Endothelial cell of umbilical vein (primary cell): ENCODE measurements at regions of chr1 and their contacts with region 1.

Region 1: GRCh38 chr1:165367375-165367993 is 11.0 kb upstream of the LMX1A start:
- DNase-seq: peak; percentile 69
- H3K4me3 ChIP-seq: no peak overlapping the region
- H3K27ac ChIP-seq: no peak overlapping the region
- H3K4me1 ChIP-seq: no peaks in the 10 kb centered on the region
- H3K27me3 ChIP-seq: peaks cover 5 to 14% of the 10 kb centered on the region in 2 experiments
- CTCF ChIP-seq: peak; percentile 88 to 96
- POLR2A ChIP-seq: no peak

Region 2: DNA sequence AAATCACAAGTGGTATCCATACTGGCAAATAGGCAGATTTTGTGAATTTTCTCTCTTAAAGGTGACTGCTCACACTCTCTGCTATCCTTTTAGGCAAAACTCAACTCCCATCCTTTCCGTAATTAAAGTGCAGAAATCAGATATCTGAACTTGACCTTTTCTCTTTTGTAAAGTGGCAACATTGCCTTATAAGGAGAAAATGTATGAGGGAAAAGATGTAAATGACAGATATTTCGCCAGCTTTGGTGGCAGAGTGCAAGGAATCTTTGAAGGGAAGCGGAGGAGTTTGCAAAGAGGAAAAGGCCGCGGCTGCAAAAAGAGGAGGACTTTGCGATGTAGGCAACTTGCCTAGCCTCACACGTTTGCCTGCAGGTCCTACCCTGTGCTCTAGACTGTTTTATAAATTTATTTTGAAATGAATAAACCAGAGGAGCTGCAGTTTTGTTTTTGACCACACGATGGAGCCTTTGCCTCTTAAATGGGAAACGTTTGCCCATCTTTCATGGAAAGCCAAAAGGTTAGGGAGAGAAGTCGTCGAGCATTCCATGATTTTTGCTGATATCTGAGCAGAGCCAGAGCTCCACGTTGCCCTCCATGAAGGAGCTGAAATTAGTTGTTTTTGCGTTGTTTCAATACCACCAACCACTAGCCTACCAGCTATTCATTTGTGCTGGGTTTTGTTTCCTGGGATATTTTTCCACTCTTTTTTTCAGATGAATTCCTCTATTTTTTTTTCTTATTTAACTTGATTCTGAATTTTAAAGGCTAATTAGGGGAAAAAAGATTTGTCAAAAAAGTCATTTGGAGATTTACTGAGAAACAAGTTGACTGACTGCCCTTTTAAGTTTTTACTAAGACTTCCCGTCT is 253.2 kb before region 1 on chr1:
- CTCF ChIA-PET with region 1: interaction called, 4 read pairs
- POLR2A ChIA-PET with region 1: no interaction called
- dilution Hi-C with region 1: no loop called
- intact Hi-C with region 1: loop called (anchors 2 kb)
- DNase-seq: peak; percentile 48
- H3K4me3 ChIP-seq: no peak overlapping the region
- H3K27ac ChIP-seq: no peak overlapping the region
- H3K4me1 ChIP-seq: no peaks in the 10 kb centered on the region
- H3K27me3 ChIP-seq: peaks cover 1 to 10% of the 10 kb centered on the region in 2 experiments
- CTCF ChIP-seq: peak; percentile 56 to 68
- POLR2A ChIP-seq: no peak

Region 3: GRCh38 chr1:165144757-165145397 is 222.6 kb before region 1 on chr1:
- CTCF ChIA-PET with region 1: no interaction called
- POLR2A ChIA-PET with region 1: no interaction called
- dilution Hi-C with region 1: no loop called
- intact Hi-C with region 1: loop called (anchors 2 kb)
- DNase-seq: peak; percentile 49
- H3K4me3 ChIP-seq: no peak overlapping the region
- H3K27ac ChIP-seq: no peak overlapping the region
- H3K4me1 ChIP-seq: no peaks in the 10 kb centered on the region
- H3K27me3 ChIP-seq: no peaks in the 10 kb centered on the region
- CTCF ChIP-seq: peak; percentile 71 to 76
- POLR2A ChIP-seq: no peak

Region 4: GRCh38 chr1:165355977-165356811 is 11.3 kb before region 1 on chr1 and contains the start of gene LMX1A:
- CTCF ChIA-PET with region 1: interaction called, 51 read pairs
- POLR2A ChIA-PET with region 1: no interaction called
- dilution Hi-C with region 1: no loop called
- intact Hi-C with region 1: no loop called
- DNase-seq: no peak
- H3K4me3 ChIP-seq: no peak within 1 kb of the TSS
- H3K27ac ChIP-seq: no peak within 1 kb of the TSS
- H3K4me1 ChIP-seq: no peaks in the 10 kb centered on the region
- H3K27me3 ChIP-seq: peaks cover 73 to 81% of the 10 kb centered on the region in 2 experiments
- CTCF ChIP-seq: no peak
- POLR2A ChIP-seq: no peak
- total RNA-seq, gene LMX1A: not detected in 2 replicates

Region 5: GRCh38 chr1:165392634-165393571 is 25.4 kb after region 1 on chr1:
- CTCF ChIA-PET with region 1: interaction called, 29 read pairs
- POLR2A ChIA-PET with region 1: no interaction called
- dilution Hi-C with region 1: no loop called
- intact Hi-C with region 1: no loop called
- DNase-seq: peak; percentile 67
- H3K4me3 ChIP-seq: no peak overlapping the region
- H3K27ac ChIP-seq: no peak overlapping the region
- H3K4me1 ChIP-seq: peaks cover 8% of the 10 kb centered on the region
- H3K27me3 ChIP-seq: peaks cover 19 to 32% of the 10 kb centered on the region in 2 experiments
- CTCF ChIP-seq: peak; percentile 90 to 92
- POLR2A ChIP-seq: no peak

Region 6: GRCh38 chr1:165431079-165431478 is 63.6 kb after region 1 on chr1:
- CTCF ChIA-PET with region 1: no interaction called
- POLR2A ChIA-PET with region 1: no interaction called
- dilution Hi-C with region 1: no loop called
- intact Hi-C with region 1: no loop called
- DNase-seq: no peak
- H3K4me3 ChIP-seq: no peak overlapping the region
- H3K27ac ChIP-seq: no peak overlapping the region
- H3K4me1 ChIP-seq: peaks cover 5% of the 10 kb centered on the region
- H3K27me3 ChIP-seq: no peaks in the 10 kb centered on the region
- CTCF ChIP-seq: no peak
- POLR2A ChIP-seq: no peak